HCT116 (cell line): ENCODE measurements at regions of chr13 and their contacts with region 1.

Region 1: GRCh38 chr13:77329133-77329910 is 2.4 kb upstream of the MYCBP2 start:
- DNase-seq: peak; percentile 95
- ATAC-seq: peak; percentile 77
- H3K4me3 ChIP-seq: peak overlapping the region; percentile 80 to 92
- H3K27ac ChIP-seq: peak overlapping the region; percentile 93
- H3K4me1 ChIP-seq: peaks cover 24 to 35% of the 10 kb centered on the region in 2 experiments
- H3K27me3 ChIP-seq: peaks cover 7% of the 10 kb centered on the region; the same call in 1 of the 2 replicates
- CTCF ChIP-seq: no peak
- POLR2A ChIP-seq: peak; percentile 79
- RAD21 ChIP-seq: no peak

Region 2: DNA sequence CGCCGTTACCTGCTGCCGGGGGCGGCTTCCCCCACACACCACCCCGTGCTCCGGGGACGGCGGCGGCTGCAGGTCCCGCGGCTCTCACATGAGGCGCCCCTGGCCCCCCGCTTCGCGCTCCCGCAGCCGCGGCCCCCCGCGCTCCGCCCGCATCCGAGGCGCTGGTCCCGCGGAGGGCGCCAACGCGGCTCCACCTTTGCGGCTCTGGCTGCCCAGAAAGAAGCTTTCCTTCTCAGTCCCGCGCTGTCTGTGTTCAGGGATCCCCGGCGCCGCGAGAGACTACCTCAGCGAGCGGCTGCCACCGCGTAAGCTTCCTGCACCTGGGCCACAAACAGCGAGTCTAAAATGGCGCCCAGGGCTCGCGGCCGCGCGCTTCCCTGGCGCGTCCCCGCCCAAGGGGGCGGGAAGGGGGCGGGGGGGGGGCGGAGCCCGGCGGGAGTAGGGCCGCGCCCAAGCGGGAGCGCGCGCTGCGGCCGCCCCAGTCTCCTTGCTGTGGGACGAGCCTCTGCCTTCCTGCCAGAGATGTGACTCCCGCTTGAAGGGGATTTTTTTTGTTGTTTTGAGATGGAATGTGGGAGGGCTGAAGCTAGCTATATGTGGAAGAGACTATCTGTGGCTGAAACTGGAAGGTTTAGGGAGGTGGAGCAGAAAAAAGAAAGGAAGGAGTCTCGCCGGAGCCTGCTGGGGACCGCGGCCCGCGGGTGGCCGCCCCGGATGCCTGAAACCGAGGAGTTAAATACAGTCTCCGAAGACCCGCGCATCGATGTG is 302.3 kb before region 1 on chr13 and contains the start of gene FBXL3:
- CTCF ChIA-PET with region 1: no interaction called
- POLR2A ChIA-PET with region 1: no interaction called
- RAD21 ChIA-PET with region 1: no interaction called
- intact Hi-C with region 1: loop called (anchors 10 kb)
- DNase-seq: peak; percentile 46
- ATAC-seq: peak; percentile 77
- H3K4me3 ChIP-seq: peak within 1 kb of the TSS; percentile 63 to 84
- H3K27ac ChIP-seq: peak within 1 kb of the TSS; percentile 94
- H3K4me1 ChIP-seq: peaks cover 9 to 25% of the 10 kb centered on the region in 2 experiments; a peak in 3 of 4 replicates
- H3K27me3 ChIP-seq: no peaks in the 10 kb centered on the region
- CTCF ChIP-seq: no peak
- POLR2A ChIP-seq: peak; percentile 13
- RAD21 ChIP-seq: no peak
- total RNA-seq, gene FBXL3: 24.0 TPM

Region 3: DNA sequence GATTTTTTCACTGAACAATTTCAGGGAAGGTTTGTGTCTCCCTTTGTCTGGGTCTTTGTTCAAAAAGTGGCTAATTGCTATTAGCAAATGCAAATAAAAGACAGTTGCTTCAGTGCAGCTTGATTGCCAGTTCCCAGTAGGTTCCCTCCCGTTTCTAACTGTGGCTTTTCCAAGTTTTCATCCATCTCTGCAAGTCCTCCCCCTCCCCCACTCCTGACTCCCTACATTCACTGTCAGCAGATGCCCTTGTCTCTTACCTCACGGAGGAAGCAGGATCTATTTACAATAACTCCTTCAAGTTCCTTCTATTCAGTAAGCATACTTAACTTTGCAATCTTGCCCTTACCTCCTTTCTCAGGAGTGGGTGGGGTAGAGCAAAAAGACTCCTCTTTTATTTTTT is 150.7 kb after region 1 on chr13:
- CTCF ChIA-PET with region 1: interaction called, 9 read pairs
- POLR2A ChIA-PET with region 1: interaction called, 3 read pairs
- RAD21 ChIA-PET with region 1: interaction called in 1 of 2 experiments, 6 read pairs
- intact Hi-C with region 1: loop called (anchors 1 kb)
- DNase-seq: no peak
- ATAC-seq: no peak
- H3K4me3 ChIP-seq: no peak overlapping the region
- H3K27ac ChIP-seq: no peak overlapping the region
- H3K4me1 ChIP-seq: peaks cover 0 to 7% of the 10 kb centered on the region in 2 experiments; a peak in 2 of 4 replicates
- H3K27me3 ChIP-seq: no peaks in the 10 kb centered on the region
- CTCF ChIP-seq: no peak
- POLR2A ChIP-seq: no peak
- RAD21 ChIP-seq: no peak

Region 4: GRCh38 chr13:77565635-77566034 is 236.3 kb after region 1 on chr13:
- CTCF ChIA-PET with region 1: no interaction called
- POLR2A ChIA-PET with region 1: no interaction called
- RAD21 ChIA-PET with region 1: no interaction called
- intact Hi-C with region 1: loop called (anchors 5 kb)
- DNase-seq: peak; percentile 12
- ATAC-seq: peak; percentile 74; the same call in 1 of the 2 replicates
- H3K4me3 ChIP-seq: no peak overlapping the region
- H3K27ac ChIP-seq: no peak overlapping the region
- H3K4me1 ChIP-seq: no peaks in the 10 kb centered on the region
- H3K27me3 ChIP-seq: no peaks in the 10 kb centered on the region
- CTCF ChIP-seq: peak; percentile 29 to 63 (median 32); a peak in 3 of 6 replicates
- POLR2A ChIP-seq: no peak
- RAD21 ChIP-seq: peak; percentile 64

Region 5: GRCh38 chr13:78258304-78258703 is 929.0 kb after region 1 on chr13:
- CTCF ChIA-PET with region 1: no interaction called
- POLR2A ChIA-PET with region 1: no interaction called
- RAD21 ChIA-PET with region 1: no interaction called
- intact Hi-C with region 1: no loop called
- DNase-seq: no peak
- ATAC-seq: no peak
- H3K4me3 ChIP-seq: no peak overlapping the region
- H3K27ac ChIP-seq: no peak overlapping the region
- H3K4me1 ChIP-seq: no peaks in the 10 kb centered on the region
- H3K27me3 ChIP-seq: no peaks in the 10 kb centered on the region
- CTCF ChIP-seq: no peak
- POLR2A ChIP-seq: no peak
- RAD21 ChIP-seq: no peak

Region 6: GRCh38 chr13:78273116-78273515 is 943.8 kb after region 1 on chr13:
- CTCF ChIA-PET with region 1: no interaction called
- POLR2A ChIA-PET with region 1: no interaction called
- RAD21 ChIA-PET with region 1: no interaction called
- intact Hi-C with region 1: no loop called
- DNase-seq: no peak
- ATAC-seq: no peak
- H3K4me3 ChIP-seq: no peak overlapping the region
- H3K27ac ChIP-seq: no peak overlapping the region
- H3K4me1 ChIP-seq: no peaks in the 10 kb centered on the region
- H3K27me3 ChIP-seq: no peaks in the 10 kb centered on the region
- CTCF ChIP-seq: no peak
- POLR2A ChIP-seq: no peak
- RAD21 ChIP-seq: no peak